A549 (cell line): ENCODE measurements at regions of chr3 and their contacts with region 1.

Region 1: DNA sequence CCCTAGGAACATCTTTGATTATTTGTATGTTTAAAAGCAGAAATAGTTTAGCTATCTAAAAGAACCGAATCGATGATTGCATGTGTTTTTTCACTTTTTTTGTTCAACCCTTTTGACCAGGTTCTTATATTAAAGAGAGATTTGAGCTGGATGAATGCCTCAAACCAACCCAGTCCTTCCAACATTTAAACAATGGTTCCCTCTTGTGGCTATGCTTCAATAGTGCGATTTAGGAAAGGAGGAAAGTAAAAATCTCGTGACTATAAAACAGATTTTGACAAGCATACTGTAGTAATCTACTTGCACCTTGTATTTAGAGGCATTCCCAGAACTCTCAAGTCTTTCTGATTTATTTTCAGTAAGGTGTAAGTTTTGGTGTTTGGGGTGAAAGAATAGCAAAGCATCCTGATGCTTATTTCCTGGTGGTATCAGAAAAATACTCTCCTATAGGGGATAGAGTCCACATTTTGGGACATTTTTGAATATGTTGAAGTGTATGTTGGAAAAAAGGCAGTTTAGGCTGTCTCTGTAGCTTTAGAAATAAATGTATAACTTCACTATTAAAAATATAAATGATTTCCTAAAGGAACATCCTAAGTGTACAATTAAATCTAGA is 159.6 kb upstream of the KCNH8 start:
- DNase-seq: peak; percentile 7 to 38
- ATAC-seq: peak; percentile 74 to 76; a peak in 5 of 6 replicates
- H3K4me3 ChIP-seq: no peak overlapping the region
- H3K27ac ChIP-seq: no peak overlapping the region
- H3K4me1 ChIP-seq: no peaks in the 10 kb centered on the region
- CTCF ChIP-seq: peak; percentile 50
- EP300 ChIP-seq: no peak
- POLR2A ChIP-seq: no peak
- RAD21 ChIP-seq: peak in 1 of 2 experiments; percentile 66

Region 2: GRCh38 chr3:18847583-18848197 is 141.0 kb before region 1 on chr3:
- CTCF ChIA-PET with region 1: interaction called, 11 read pairs
- POLR2A ChIA-PET with region 1: no interaction called
- DNase-seq: peak; percentile 10 to 22
- ATAC-seq: peak in 1 of 2 experiments; percentile 67; a peak in 2 of 6 replicates
- H3K4me3 ChIP-seq: no peak overlapping the region
- H3K27ac ChIP-seq: no peak overlapping the region
- H3K4me1 ChIP-seq: no peaks in the 10 kb centered on the region
- CTCF ChIP-seq: peak; percentile 29; the same call in 2 of the 3 replicates
- EP300 ChIP-seq: no peak
- POLR2A ChIP-seq: no peak
- RAD21 ChIP-seq: no peak

Region 3: GRCh38 chr3:19002606-19003005 is 13.9 kb after region 1 on chr3:
- CTCF ChIA-PET with region 1: no interaction called
- POLR2A ChIA-PET with region 1: no interaction called
- DNase-seq: no peak
- ATAC-seq: no peak
- H3K4me3 ChIP-seq: no peak overlapping the region
- H3K27ac ChIP-seq: no peak overlapping the region
- H3K4me1 ChIP-seq: no peaks in the 10 kb centered on the region
- CTCF ChIP-seq: no peak
- EP300 ChIP-seq: no peak
- POLR2A ChIP-seq: no peak
- RAD21 ChIP-seq: no peak